Colonic mucosa (tissue), 4 donors: ENCODE measurements at regions of chr17 and their contacts with region 1.

Region 1: GRCh38 chr17:29777663-29778062 is 152.4 kb downstream of the SSH2 start:
- DNase-seq: no peak
- H3K4me3 ChIP-seq: no peak overlapping the region
- H3K27ac ChIP-seq: no peak overlapping the region
- H3K4me1 ChIP-seq: no peaks in the 10 kb centered on the region
- H3K27me3 ChIP-seq: no peaks in the 10 kb centered on the region
- CTCF ChIP-seq: no peak

Region 2: GRCh38 chr17:29579866-29580771 is 197.5 kb before region 1 on chr17:
- intact Hi-C with region 1: loop called (anchors 5 kb)
- DNase-seq: peak; percentile 88
- H3K4me3 ChIP-seq: no peak overlapping the region
- H3K27ac ChIP-seq: no peak overlapping the region
- H3K4me1 ChIP-seq: peaks cover 2% of the 10 kb centered on the region
- H3K27me3 ChIP-seq: no peaks in the 10 kb centered on the region
- CTCF ChIP-seq: peak; percentile 85

Region 3: GRCh38 chr17:29640413-29640812 is 137.2 kb before region 1 on chr17:
- intact Hi-C with region 1: loop called (anchors 5 kb)
- DNase-seq: no peak
- H3K4me3 ChIP-seq: no peak overlapping the region
- H3K27ac ChIP-seq: no peak overlapping the region
- H3K4me1 ChIP-seq: no peaks in the 10 kb centered on the region
- H3K27me3 ChIP-seq: no peaks in the 10 kb centered on the region
- CTCF ChIP-seq: no peak